GM12878 (cell line): ENCODE measurements at regions of chr3 and their contacts with region 1.

Region 1: DNA sequence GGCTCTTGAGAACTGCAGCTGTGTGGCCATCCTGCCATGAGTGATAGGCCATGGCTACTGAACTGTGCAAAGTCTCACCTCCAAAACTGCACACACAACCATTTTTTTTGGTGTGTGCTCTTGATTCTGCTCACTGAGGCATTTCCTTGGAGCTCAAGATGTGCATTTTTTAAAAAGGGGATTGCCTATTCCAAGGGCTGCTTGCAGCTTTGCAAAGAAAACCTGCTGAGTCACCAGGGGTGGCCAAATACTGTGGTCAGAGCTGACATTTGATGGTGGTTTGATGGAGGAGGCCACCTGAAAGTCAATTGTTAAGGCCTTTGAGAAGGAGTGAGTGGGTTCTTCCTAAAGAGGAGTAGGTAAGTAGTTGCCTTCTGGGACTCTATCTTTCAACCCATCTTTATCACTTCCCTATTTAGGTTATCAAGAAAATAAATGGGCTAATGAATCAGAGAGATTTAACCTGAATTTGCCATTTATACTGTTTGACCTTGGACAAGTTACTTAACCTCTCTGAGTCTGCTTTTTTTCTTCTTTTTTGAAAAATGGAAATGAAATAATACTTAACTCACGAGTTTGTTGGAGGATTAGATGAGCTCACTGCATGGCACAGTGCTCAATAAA is 87.9 kb downstream of the CHST2 start:
- DNase-seq: peak; percentile 95
- ATAC-seq: peak; percentile 96
- H3K4me3 ChIP-seq: no peak overlapping the region
- H3K27ac ChIP-seq: peak overlapping the region; percentile 62
- H3K4me1 ChIP-seq: peaks cover 27% of the 10 kb centered on the region
- H3K27me3 ChIP-seq: no peaks in the 10 kb centered on the region
- CTCF ChIP-seq: no peak
- EP300 ChIP-seq: peak in 1 of 2 experiments; percentile 44; a peak in 2 of 4 replicates
- POLR2A ChIP-seq: no peak
- RAD21 ChIP-seq: peak; percentile 13; the same call in 1 of the 2 replicates

Region 2: GRCh38 chr3:142866841-142867631 is 340.4 kb before region 1 on chr3:
- CTCF ChIA-PET with region 1: no interaction called
- POLR2A ChIA-PET with region 1: no interaction called
- RAD21 ChIA-PET with region 1: no interaction called
- SMC1A ChIA-PET with region 1: no interaction called
- in situ Hi-C with region 1: no loop called
- intact Hi-C with region 1: no loop called
- DNase-seq: no peak
- ATAC-seq: peak; percentile 27; the same call in 2 of the 3 replicates
- H3K4me3 ChIP-seq: no peak overlapping the region
- H3K27ac ChIP-seq: no peak overlapping the region
- H3K4me1 ChIP-seq: no peaks in the 10 kb centered on the region
- H3K27me3 ChIP-seq: no peaks in the 10 kb centered on the region
- CTCF ChIP-seq: 0 out of 6 replicates have a peak, but pooled peaks of 1 of the 3 experiments have one; percentile 3
- EP300 ChIP-seq: no peak
- POLR2A ChIP-seq: no peak
- RAD21 ChIP-seq: no peak

Region 3: GRCh38 chr3:143124601-143125520 is 82.6 kb before region 1 on chr3:
- CTCF ChIA-PET with region 1: interaction called, 3 read pairs
- POLR2A ChIA-PET with region 1: no interaction called
- RAD21 ChIA-PET with region 1: interaction called, 15 read pairs
- SMC1A ChIA-PET with region 1: interaction called, 17 read pairs
- in situ Hi-C with region 1: no loop called
- intact Hi-C with region 1: loop called (anchors 1 kb)
- DNase-seq: no peak
- ATAC-seq: no peak
- H3K4me3 ChIP-seq: no peak overlapping the region
- H3K27ac ChIP-seq: no peak overlapping the region
- H3K4me1 ChIP-seq: peaks cover 27% of the 10 kb centered on the region
- H3K27me3 ChIP-seq: no peaks in the 10 kb centered on the region
- CTCF ChIP-seq: no peak
- EP300 ChIP-seq: no peak
- POLR2A ChIP-seq: no peak
- RAD21 ChIP-seq: no peak

Region 4: GRCh38 chr3:143158014-143158988 is 49.1 kb before region 1 on chr3:
- CTCF ChIA-PET with region 1: interaction called, 7 read pairs
- POLR2A ChIA-PET with region 1: interaction called, 4 read pairs
- RAD21 ChIA-PET with region 1: interaction called, 18 read pairs
- SMC1A ChIA-PET with region 1: interaction called, 18 read pairs
- in situ Hi-C with region 1: no loop called
- intact Hi-C with region 1: no loop called
- DNase-seq: peak; percentile 67
- ATAC-seq: peak; percentile 88
- H3K4me3 ChIP-seq: no peak overlapping the region
- H3K27ac ChIP-seq: peak overlapping the region; percentile 3; the same call in 1 of the 2 replicates
- H3K4me1 ChIP-seq: peaks cover 22% of the 10 kb centered on the region
- H3K27me3 ChIP-seq: no peaks in the 10 kb centered on the region
- CTCF ChIP-seq: 0 out of 6 replicates have a peak, but pooled peaks of 1 of the 3 experiments have one; percentile 13
- EP300 ChIP-seq: peak; percentile 57 to 68; a peak in 1 of 4 replicates
- POLR2A ChIP-seq: no peak
- RAD21 ChIP-seq: peak; percentile 49

Region 5: GRCh38 chr3:143165211-143165610 is 42.2 kb before region 1 on chr3:
- CTCF ChIA-PET with region 1: interaction called, 6 read pairs
- POLR2A ChIA-PET with region 1: interaction called, 4 read pairs
- RAD21 ChIA-PET with region 1: interaction called, 19 read pairs
- SMC1A ChIA-PET with region 1: interaction called, 29 read pairs
- in situ Hi-C with region 1: no loop called
- intact Hi-C with region 1: loop called (anchors 2 kb)
- DNase-seq: no peak
- ATAC-seq: peak; percentile 48
- H3K4me3 ChIP-seq: peak overlapping the region; percentile 17; the same call in 1 of the 2 replicates
- H3K27ac ChIP-seq: peak overlapping the region; percentile 88
- H3K4me1 ChIP-seq: peaks cover 35% of the 10 kb centered on the region
- H3K27me3 ChIP-seq: no peaks in the 10 kb centered on the region
- CTCF ChIP-seq: no peak
- EP300 ChIP-seq: no peak
- POLR2A ChIP-seq: no peak
- RAD21 ChIP-seq: no peak

Region 6: GRCh38 chr3:143171141-143171970 is 36.1 kb before region 1 on chr3:
- CTCF ChIA-PET with region 1: interaction called, 6 read pairs
- POLR2A ChIA-PET with region 1: interaction called, 4 read pairs
- RAD21 ChIA-PET with region 1: interaction called, 17 read pairs
- SMC1A ChIA-PET with region 1: interaction called, 29 read pairs
- in situ Hi-C with region 1: no loop called
- intact Hi-C with region 1: no loop called
- DNase-seq: peak; percentile 77
- ATAC-seq: peak; percentile 85
- H3K4me3 ChIP-seq: no peak overlapping the region
- H3K27ac ChIP-seq: peak overlapping the region; percentile 82
- H3K4me1 ChIP-seq: peaks cover 35% of the 10 kb centered on the region
- H3K27me3 ChIP-seq: no peaks in the 10 kb centered on the region
- CTCF ChIP-seq: peak in 1 of 3 experiments; percentile 5; a peak in 1 of 6 replicates
- EP300 ChIP-seq: no peak
- POLR2A ChIP-seq: no peak
- RAD21 ChIP-seq: peak; percentile 14; the same call in 1 of the 2 replicates

Region 7: DNA sequence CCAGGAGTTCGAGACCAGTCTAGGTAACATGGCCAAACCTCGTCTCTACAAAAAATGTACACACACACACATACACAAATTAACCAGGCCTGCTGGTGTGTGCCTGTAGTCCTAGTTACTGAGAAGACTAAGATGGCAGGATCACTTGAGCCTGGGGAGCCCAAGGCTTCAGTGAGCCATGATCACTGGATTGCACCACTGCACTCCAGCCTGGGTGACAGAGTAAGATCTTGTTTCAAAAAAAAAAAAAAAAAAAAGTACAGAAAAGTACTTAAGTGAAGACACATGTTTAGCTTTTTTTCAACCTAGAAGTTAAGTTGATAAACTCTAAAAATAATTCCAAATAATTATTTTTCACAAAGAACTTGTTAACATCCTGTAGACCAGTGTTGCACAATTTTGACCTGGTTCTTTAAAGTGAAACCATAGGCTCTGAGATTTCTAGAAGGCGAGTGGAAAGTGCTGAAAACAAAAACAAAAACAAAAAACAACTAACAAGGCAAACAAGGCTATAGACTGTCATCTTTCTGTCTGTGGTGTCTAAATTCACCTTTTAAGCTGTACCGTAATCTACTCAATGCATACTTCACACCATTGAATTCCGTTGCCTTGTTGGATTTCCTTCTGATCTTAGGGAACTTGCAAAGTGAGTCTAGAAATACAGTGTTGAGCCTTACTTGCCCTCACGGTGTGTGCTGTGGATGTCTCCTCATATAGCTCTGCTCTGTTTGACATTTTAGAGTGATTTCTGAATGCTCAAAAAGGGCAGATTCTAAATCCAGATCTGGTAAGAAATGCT is 24.4 kb before region 1 on chr3:
- CTCF ChIA-PET with region 1: interaction called, 4 read pairs
- POLR2A ChIA-PET with region 1: no interaction called
- RAD21 ChIA-PET with region 1: interaction called, 10 read pairs
- SMC1A ChIA-PET with region 1: interaction called, 5 read pairs
- in situ Hi-C with region 1: no loop called
- intact Hi-C with region 1: loop called (anchors 1 kb)
- DNase-seq: no peak
- ATAC-seq: no peak
- H3K4me3 ChIP-seq: no peak overlapping the region
- H3K27ac ChIP-seq: no peak overlapping the region
- H3K4me1 ChIP-seq: no peaks in the 10 kb centered on the region; the same call in 1 of the 2 replicates
- H3K27me3 ChIP-seq: no peaks in the 10 kb centered on the region
- CTCF ChIP-seq: no peak
- EP300 ChIP-seq: no peak
- POLR2A ChIP-seq: no peak
- RAD21 ChIP-seq: no peak

Region 8: DNA sequence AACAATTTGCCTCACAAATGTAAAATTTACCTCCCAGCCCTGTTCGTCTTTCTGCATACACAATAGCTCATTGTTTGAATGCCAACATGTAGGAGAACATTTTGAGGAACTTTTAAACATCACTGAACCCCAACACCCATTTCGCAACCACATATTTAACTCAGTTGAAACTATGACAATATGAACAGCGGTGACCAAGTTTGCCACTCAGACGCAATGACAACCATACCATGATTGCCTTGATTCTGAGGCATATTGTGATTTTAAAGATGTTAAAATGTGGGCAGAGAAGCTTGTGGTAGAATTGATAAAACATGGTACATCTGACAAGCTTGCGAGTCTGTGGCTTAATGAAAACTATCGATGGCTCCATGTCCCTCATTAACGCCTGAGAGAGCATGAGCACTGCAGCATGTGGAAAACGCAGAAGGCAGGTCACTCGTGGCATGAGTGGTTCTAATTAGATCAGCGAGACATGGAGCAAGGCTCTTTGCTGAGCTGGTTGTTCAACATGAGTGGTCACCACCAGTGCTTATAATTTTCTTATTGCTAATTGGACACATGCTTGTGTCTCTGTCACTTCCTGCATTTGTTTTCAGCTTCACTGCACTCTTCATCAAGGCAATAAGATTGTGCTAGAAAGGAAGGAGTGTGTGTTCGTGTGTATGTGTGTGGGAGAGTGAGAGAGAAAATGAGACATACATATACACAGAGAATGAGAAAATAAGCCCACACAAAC is 28.9 kb after region 1 on chr3:
- CTCF ChIA-PET with region 1: no interaction called
- POLR2A ChIA-PET with region 1: no interaction called
- RAD21 ChIA-PET with region 1: interaction called, 4 read pairs
- SMC1A ChIA-PET with region 1: interaction called, 12 read pairs
- in situ Hi-C with region 1: no loop called
- intact Hi-C with region 1: no loop called
- DNase-seq: peak; percentile 49
- ATAC-seq: peak; percentile 93
- H3K4me3 ChIP-seq: no peak overlapping the region
- H3K27ac ChIP-seq: peak overlapping the region; percentile 6; the same call in 1 of the 2 replicates
- H3K4me1 ChIP-seq: peaks cover 13% of the 10 kb centered on the region
- H3K27me3 ChIP-seq: no peaks in the 10 kb centered on the region
- CTCF ChIP-seq: no peak
- EP300 ChIP-seq: no peak
- POLR2A ChIP-seq: no peak
- RAD21 ChIP-seq: no peak